Posterior vena cava (tissue), 2 donors: ENCODE measurements at regions of chr16 and their contacts with region 1.

Region 1: GRCh38 chr16:48609652-48610029 is 339 bp downstream of the N4BP1 start:
- DNase-seq: peak; percentile 90

Region 2: DNA sequence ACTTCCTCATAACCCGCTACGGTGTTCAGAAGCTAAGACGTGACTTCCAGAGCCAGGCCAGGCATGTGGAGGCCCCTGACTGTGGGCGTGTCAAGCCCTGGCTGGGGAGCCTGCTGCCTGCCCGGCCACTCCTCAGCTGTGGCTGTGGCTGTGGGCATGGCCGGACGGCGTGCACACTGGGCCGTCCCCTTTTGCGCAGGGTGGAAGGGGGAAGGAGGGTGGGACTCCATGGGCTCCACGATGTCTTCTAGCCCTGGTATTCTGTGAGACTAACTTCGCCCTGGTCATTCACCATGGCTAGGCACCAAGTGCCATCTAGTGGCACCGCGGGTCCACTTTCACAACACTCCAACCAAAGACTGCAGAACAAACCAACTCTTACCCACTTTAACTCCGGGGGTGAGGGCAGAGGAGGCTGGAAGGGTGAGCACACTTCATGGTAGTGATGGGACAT is 67.6 kb before region 1 on chr16:
- intact Hi-C with region 1: loop called in 1 of 2 experiments (anchors 10 kb)
- DNase-seq: peak; percentile 89

Region 3: GRCh38 chr16:48555155-48555554 is 54.5 kb before region 1 on chr16:
- intact Hi-C with region 1: loop called in 1 of 2 experiments (anchors 2 kb)
- DNase-seq: no peak

Region 4: GRCh38 chr16:48576927-48577326 is 32.7 kb before region 1 on chr16:
- intact Hi-C with region 1: no loop called
- DNase-seq: no peak

Region 5: GRCh38 chr16:49085686-49086085 is 476.0 kb after region 1 on chr16:
- intact Hi-C with region 1: loop called in 1 of 2 experiments (anchors 10 kb)
- DNase-seq: no peak